ENCODE measurements at regions of chr11 and their contacts with region 1.

Region 1: GRCh38 chr11:3807909-3808860 is at the start of gene PGAP2:
- DNase-seq: peak; percentile 37 to 75 (median 52)
- ATAC-seq: peak; percentile 83
- H3K4me3 ChIP-seq: peak within 1 kb of the TSS; percentile 66
- H3K4me3 Mint-ChIP-seq: peak within 1 kb of the TSS; percentile 90 to 99 (median 96)
- H3K27ac ChIP-seq: peak within 1 kb of the TSS; percentile 78
- H3K27ac Mint-ChIP-seq: peak within 1 kb of the TSS; percentile 77 to 97 (median 93)
- H3K4me1 ChIP-seq: peaks cover 3 to 12% of the 10 kb centered on the region in 2 donors
- H3K4me1 Mint-ChIP-seq: peaks cover 12 to 27% (median 18%) of the 10 kb centered on the region in 7 donors
- H3K27me3 ChIP-seq: no peaks in the 10 kb centered on the region
- H3K27me3 Mint-ChIP-seq: no peaks in the 10 kb centered on the region
- total RNA-seq, gene PGAP2: 20.8 to 28.3 (median 26.1) TPM

Region 2: DNA sequence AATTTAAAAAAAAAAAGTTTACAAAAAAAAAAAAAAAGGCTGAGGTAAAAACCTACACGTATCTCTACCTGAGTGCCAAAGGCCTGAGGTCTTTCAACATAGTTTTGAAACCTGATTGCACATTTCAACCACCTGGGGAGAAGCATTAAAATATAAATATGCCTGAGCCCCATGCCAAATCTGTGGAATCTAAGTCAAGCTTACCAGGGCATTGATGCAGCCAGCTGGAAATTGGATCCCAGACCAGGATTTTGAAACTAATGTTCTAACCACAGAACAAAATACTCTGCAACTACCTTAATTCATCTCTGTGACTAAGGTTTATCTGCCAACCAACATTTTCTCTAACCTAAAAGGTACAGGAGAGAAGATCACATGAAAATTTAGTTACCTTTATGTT is 98.2 kb before region 1 on chr11:
- CTCF ChIA-PET with region 1: no interaction called
- POLR2A ChIA-PET with region 1: no interaction called
- intact Hi-C with region 1: loop called in 1 of 2 experiments (anchors 10 kb)
- DNase-seq: no peak
- ATAC-seq: no peak
- H3K4me3 ChIP-seq: no peak overlapping the region
- H3K4me3 Mint-ChIP-seq: no peak overlapping the region
- H3K27ac ChIP-seq: no peak overlapping the region
- H3K27ac Mint-ChIP-seq: peak overlapping the region in 1 of 9 donors; percentile 13
- H3K4me1 ChIP-seq: no peaks in the 10 kb centered on the region
- H3K4me1 Mint-ChIP-seq: peaks cover 0 to 5% (median 0%) of the 10 kb centered on the region in 7 donors
- H3K27me3 ChIP-seq: no peaks in the 10 kb centered on the region
- H3K27me3 Mint-ChIP-seq: no peaks in the 10 kb centered on the region

Region 3: DNA sequence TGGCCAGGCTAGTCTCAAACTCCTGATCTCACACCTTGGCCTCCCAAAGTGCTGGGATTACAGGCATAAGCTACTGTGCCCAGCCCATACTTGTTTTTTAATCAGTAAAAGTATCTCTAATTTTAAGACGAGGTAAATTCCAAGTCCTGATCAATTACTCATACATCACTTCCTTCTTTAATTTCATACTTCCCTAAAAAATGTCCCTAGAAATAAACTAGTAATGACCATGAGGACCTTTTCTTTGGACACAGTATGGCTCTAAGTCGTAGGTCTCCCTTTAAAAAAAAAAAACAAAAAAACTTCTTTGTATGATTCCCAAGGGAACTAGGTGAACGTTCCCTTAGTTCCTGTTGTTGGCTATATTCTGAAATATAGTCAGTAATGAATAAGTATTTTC is 40.6 kb before region 1 on chr11:
- CTCF ChIA-PET with region 1: no interaction called
- POLR2A ChIA-PET with region 1: interaction called, 3 read pairs
- intact Hi-C with region 1: loop called (anchors 5 kb)
- DNase-seq: no peak
- ATAC-seq: no peak
- H3K4me3 ChIP-seq: no peak overlapping the region
- H3K4me3 Mint-ChIP-seq: no peak overlapping the region
- H3K27ac ChIP-seq: no peak overlapping the region
- H3K27ac Mint-ChIP-seq: peak overlapping the region in 1 of 9 donors; percentile 31
- H3K4me1 ChIP-seq: no peaks in the 10 kb centered on the region
- H3K4me1 Mint-ChIP-seq: peaks cover 0 to 4% (median 0%) of the 10 kb centered on the region in 7 donors
- H3K27me3 ChIP-seq: no peaks in the 10 kb centered on the region
- H3K27me3 Mint-ChIP-seq: no peaks in the 10 kb centered on the region

Region 4: GRCh38 chr11:3781423-3781822 is 26.8 kb before region 1 on chr11:
- CTCF ChIA-PET with region 1: interaction called, 5 read pairs
- POLR2A ChIA-PET with region 1: no interaction called
- intact Hi-C with region 1: loop called (anchors 1 to 2 kb)
- DNase-seq: no peak
- ATAC-seq: no peak
- H3K4me3 ChIP-seq: no peak overlapping the region
- H3K4me3 Mint-ChIP-seq: peak overlapping the region in 2 of 10 donors; percentile 21 to 51
- H3K27ac ChIP-seq: no peak overlapping the region
- H3K27ac Mint-ChIP-seq: peak overlapping the region in 7 of 9 donors; percentile 11 to 95 (median 72)
- H3K4me1 ChIP-seq: peaks cover 16 to 20% of the 10 kb centered on the region in 2 donors
- H3K4me1 Mint-ChIP-seq: peaks cover 21 to 56% (median 51%) of the 10 kb centered on the region in 7 donors
- H3K27me3 ChIP-seq: no peaks in the 10 kb centered on the region
- H3K27me3 Mint-ChIP-seq: no peaks in the 10 kb centered on the region

Region 5: DNA sequence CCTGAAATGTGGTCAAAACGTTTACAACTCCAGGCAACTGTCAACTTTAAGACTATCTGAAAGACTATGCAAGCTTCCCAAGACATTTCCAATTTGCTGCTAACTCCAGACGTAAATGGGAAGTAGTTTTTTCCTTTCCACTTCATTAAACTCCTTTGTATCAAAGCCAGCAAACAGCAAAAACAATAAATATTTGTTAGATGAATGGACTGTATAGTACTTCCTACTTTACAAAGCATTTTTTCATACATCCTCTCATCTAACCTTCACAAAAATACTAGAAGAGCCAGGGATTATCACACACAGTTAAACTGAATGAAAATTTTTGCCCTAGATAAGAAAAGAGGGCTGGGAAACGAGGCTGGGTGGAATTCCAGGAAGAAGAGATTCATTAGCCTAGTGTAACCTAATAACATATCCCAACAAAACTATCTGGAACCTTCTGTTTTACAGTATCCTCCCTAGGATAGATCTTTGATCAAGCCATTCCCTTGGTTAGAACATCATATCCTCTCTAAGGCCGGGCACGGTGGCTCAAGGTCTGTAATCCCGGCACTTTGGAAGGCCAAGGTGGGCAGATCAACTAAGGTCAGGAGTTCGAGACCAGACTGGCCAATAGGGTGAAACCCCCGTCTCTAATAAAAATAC is 21.3 kb before region 1 on chr11:
- CTCF ChIA-PET with region 1: interaction called, 7 read pairs
- POLR2A ChIA-PET with region 1: interaction called, 10 read pairs
- intact Hi-C with region 1: loop called (anchors 1 to 2 kb)
- DNase-seq: no peak
- ATAC-seq: no peak
- H3K4me3 ChIP-seq: no peak overlapping the region
- H3K4me3 Mint-ChIP-seq: peak overlapping the region in 7 of 10 donors; percentile 24 to 75 (median 63)
- H3K27ac ChIP-seq: peak overlapping the region; percentile 50
- H3K27ac Mint-ChIP-seq: peak overlapping the region; percentile 81 to 97 (median 89)
- H3K4me1 ChIP-seq: peaks cover 16 to 28% of the 10 kb centered on the region in 2 donors
- H3K4me1 Mint-ChIP-seq: peaks cover 44 to 83% (median 73%) of the 10 kb centered on the region in 7 donors
- H3K27me3 ChIP-seq: no peaks in the 10 kb centered on the region
- H3K27me3 Mint-ChIP-seq: no peaks in the 10 kb centered on the region

Region 6: GRCh38 chr11:3841426-3842350 is 33.5 kb after region 1 on chr11:
- CTCF ChIA-PET with region 1: interaction called, 8 read pairs
- POLR2A ChIA-PET with region 1: interaction called, 45 read pairs
- intact Hi-C with region 1: loop called (anchors 1 kb)
- DNase-seq: peak; percentile 82 to 98 (median 95)
- ATAC-seq: peak; percentile 84
- H3K4me3 ChIP-seq: peak overlapping the region; percentile 51
- H3K4me3 Mint-ChIP-seq: peak overlapping the region; percentile 76 to 99 (median 91)
- H3K27ac ChIP-seq: peak overlapping the region; percentile 95
- H3K27ac Mint-ChIP-seq: peak overlapping the region; percentile 87 to 99 (median 97)
- H3K4me1 ChIP-seq: peaks cover 30 to 34% of the 10 kb centered on the region in 2 donors
- H3K4me1 Mint-ChIP-seq: peaks cover 19 to 64% (median 54%) of the 10 kb centered on the region in 7 donors
- H3K27me3 ChIP-seq: no peaks in the 10 kb centered on the region
- H3K27me3 Mint-ChIP-seq: no peaks in the 10 kb centered on the region